ENCODE measurements at regions of chr4 and their contacts with region 1.

Region 1: GRCh38 chr4:105708530-105709391 is at the starts of genes GSTCD and INTS12:
- DNase-seq: peak; percentile 93
- H3K4me3 Mint-ChIP-seq: peak within 1 kb of the TSS; percentile 98
- H3K27ac Mint-ChIP-seq: peak within 1 kb of the TSS; percentile 91
- H3K4me1 Mint-ChIP-seq: peaks cover 26% of the 10 kb centered on the region
- H3K27me3 Mint-ChIP-seq: no peaks in the 10 kb centered on the region
- total RNA-seq, gene GSTCD: 15.8 to 18.2 TPM
- total RNA-seq, gene INTS12: 24.5 to 24.8 TPM

Region 2: GRCh38 chr4:104818579-104818978 is 890.2 kb before region 1 on chr4:
- CTCF ChIA-PET with region 1: no interaction called
- intact Hi-C with region 1: no loop called
- DNase-seq: no peak
- H3K4me3 Mint-ChIP-seq: no peak overlapping the region
- H3K27ac Mint-ChIP-seq: no peak overlapping the region
- H3K4me1 Mint-ChIP-seq: no peaks in the 10 kb centered on the region
- H3K27me3 Mint-ChIP-seq: no peaks in the 10 kb centered on the region

Region 3: DNA sequence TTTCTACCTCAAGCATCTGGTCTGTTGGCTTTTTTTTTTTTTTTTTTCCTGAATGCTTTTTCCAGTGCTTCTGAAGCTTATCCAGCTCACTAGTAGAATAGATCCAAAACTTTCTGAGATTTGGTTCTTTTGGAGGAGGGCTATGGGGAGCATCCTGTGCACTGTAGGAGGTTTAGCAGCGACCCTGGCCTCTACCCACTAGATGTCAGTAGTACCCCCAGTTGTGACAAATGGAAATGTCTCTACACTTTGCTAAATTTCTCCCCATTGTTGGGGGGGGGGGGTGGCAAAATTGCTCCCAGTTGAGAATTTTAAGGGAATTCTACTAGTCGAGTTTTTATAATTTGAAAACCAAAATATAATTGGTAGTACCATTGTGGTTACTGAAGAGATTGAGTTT is 211.9 kb before region 1 on chr4:
- CTCF ChIA-PET with region 1: no interaction called
- intact Hi-C with region 1: no loop called
- DNase-seq: no peak
- H3K4me3 Mint-ChIP-seq: no peak overlapping the region
- H3K27ac Mint-ChIP-seq: no peak overlapping the region
- H3K4me1 Mint-ChIP-seq: no peaks in the 10 kb centered on the region
- H3K27me3 Mint-ChIP-seq: peaks cover 24% of the 10 kb centered on the region

Region 4: DNA sequence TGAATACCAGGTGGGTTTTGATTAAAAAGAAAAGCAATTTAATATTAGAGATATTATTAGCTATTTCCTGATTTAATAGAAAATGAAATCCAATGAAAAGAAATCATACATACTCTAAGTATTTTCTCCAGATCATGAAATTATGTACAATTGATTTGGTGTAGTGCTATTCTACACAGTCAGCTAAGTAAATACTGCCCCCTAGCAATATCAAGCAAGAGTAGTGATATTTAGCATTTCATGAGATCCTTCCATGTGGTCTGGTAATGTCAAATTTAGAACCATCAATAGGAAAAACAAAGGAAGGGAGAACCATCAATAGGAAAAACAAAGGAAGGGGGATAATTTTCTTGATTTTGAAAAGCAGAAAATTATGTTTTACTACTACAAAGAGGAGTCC is 492.6 kb after region 1 on chr4:
- CTCF ChIA-PET with region 1: no interaction called
- intact Hi-C with region 1: loop called (anchors 10 kb)
- DNase-seq: no peak
- H3K4me3 Mint-ChIP-seq: no peak overlapping the region
- H3K27ac Mint-ChIP-seq: no peak overlapping the region
- H3K4me1 Mint-ChIP-seq: no peaks in the 10 kb centered on the region
- H3K27me3 Mint-ChIP-seq: no peaks in the 10 kb centered on the region

Region 5: GRCh38 chr4:106315968-106316772 is 607.4 kb after region 1 on chr4 and contains the starts of genes AIMP1 and TBCK:
- CTCF ChIA-PET with region 1: no interaction called
- intact Hi-C with region 1: loop called (anchors 1 kb)
- DNase-seq: peak; percentile 90
- H3K4me3 Mint-ChIP-seq: no peak within 1 kb of the TSS
- H3K27ac Mint-ChIP-seq: no peak within 1 kb of the TSS
- H3K4me1 Mint-ChIP-seq: peaks cover 45% of the 10 kb centered on the region
- H3K27me3 Mint-ChIP-seq: no peaks in the 10 kb centered on the region
- total RNA-seq, gene AIMP1: 49.7 to 52.0 TPM
- total RNA-seq, gene TBCK: 19.4 to 21.6 TPM

Measured in activated naive CD4-positive, alpha-beta T cell treated with anti-CD3 and anti-CD28 coated beads for 36 hours (primary cell).